Calu3 (cell line): ENCODE measurements at regions of chr16 and their contacts with region 1.

Region 1: DNA sequence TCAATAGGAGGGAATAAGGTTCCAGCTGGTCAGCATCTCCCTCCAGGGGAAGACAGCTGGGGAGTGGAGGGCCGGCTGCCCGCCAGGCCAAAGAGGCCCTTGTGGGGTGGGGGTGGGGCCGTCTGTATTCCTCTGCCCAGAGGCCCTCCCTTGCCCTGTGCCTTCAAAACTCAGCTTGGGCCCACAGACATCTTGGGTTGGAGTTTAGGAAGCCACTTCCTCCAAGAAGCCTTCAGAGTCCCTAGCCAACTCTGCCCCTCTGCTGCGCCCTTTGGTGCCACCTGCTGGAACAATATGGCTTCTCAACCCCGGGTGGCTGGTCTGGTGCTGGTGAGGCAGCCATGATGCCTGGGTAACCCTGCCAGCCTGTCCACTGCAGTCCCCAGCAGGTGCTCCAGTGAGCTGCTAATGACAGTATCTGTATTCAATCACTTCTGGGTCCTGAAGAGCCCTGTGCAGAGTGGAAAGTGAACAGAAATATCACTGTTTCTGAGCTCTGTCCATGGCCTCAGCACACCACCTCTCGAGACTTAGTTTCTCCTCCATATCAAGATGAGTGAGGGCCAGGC is 16.7 kb downstream of the HSD11B2 start:
- DNase-seq: peak; percentile 87
- H3K4me3 Mint-ChIP-seq: no peak overlapping the region
- H3K27ac Mint-ChIP-seq: no peak overlapping the region
- H3K4me1 Mint-ChIP-seq: peaks cover 22% of the 10 kb centered on the region
- H3K27me3 Mint-ChIP-seq: no peaks in the 10 kb centered on the region
- CTCF ChIP-seq: peak; percentile 79

Region 2: DNA sequence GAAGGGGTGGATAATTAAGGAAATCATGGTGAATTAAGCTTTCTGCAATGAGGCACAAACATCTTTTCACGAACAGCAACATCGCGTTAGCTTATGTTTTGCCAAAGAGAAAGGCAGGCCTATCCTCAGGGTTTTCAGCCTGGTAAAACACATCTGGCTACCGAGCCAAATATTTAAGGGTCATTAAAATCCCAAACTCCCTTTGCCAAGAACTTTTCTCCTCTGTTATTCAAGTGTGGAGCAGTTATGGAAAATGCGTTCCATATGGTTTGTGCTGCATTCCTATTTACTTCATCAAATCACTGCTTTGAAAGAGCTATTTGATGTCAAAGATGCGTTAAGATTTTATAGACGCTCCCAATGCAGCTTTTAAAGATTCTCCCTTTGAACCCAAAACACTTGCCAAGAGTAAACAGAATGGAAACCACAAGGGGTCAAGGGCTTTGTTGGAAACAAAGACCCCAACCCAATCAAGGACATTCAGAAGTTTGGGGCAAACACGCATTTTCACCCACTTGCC is 1389.4 kb before region 1 on chr16:
- CTCF ChIA-PET with region 1: no interaction called
- intact Hi-C with region 1: no loop called
- DNase-seq: no peak
- H3K4me3 Mint-ChIP-seq: no peak overlapping the region
- H3K27ac Mint-ChIP-seq: no peak overlapping the region
- H3K4me1 Mint-ChIP-seq: no peaks in the 10 kb centered on the region
- H3K27me3 Mint-ChIP-seq: peaks cover 58% of the 10 kb centered on the region
- CTCF ChIP-seq: no peak

Region 3: GRCh38 chr16:67461600-67462592 is 14.3 kb after region 1 on chr16:
- CTCF ChIA-PET with region 1: interaction called, 13 read pairs
- intact Hi-C with region 1: no loop called
- DNase-seq: peak; percentile 61
- H3K4me3 Mint-ChIP-seq: peak overlapping the region; percentile 32
- H3K27ac Mint-ChIP-seq: peak overlapping the region; percentile 52
- H3K4me1 Mint-ChIP-seq: peaks cover 46% of the 10 kb centered on the region
- H3K27me3 Mint-ChIP-seq: no peaks in the 10 kb centered on the region
- CTCF ChIP-seq: no peak